MCF 10A (cell line): ENCODE measurements at regions of chr1 and their contacts with region 1.

Region 1: DNA sequence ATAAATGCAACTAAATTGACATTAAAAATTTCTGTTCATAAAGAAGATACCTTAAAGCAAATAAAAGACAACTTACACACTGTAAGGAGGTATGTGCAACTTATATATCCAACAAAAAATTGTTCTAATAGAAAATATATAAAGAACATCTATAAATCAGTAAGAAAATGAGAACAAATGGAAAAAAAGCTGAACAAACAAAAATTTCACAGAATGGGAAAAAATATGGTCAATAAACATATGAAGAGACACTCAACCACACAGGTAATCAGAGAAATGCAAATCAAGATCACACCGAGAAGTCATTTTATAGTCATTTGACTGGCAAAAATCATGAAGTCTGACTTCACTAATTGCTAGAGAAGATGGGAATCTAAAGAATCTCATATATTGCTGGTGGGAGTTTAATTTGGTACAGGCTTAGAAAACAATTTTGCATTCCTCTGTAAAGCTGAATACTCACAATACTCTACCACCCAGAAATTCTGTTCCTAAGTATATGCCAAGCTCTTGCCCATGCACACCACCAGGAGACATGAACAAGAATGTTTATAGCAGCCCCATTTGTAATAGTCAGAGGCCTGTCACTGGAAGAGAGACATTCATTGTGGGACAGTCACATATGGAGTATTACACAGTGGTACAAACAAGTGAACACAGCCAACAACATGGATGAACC is 22.0 kb upstream of the THEM5 start:
- DNase-seq: no peak
- H3K4me3 Mint-ChIP-seq: no peak overlapping the region
- H3K27ac Mint-ChIP-seq: no peak overlapping the region
- H3K4me1 Mint-ChIP-seq: no peaks in the 10 kb centered on the region
- H3K27me3 Mint-ChIP-seq: no peaks in the 10 kb centered on the region
- CTCF ChIP-seq: no peak

Region 2: DNA sequence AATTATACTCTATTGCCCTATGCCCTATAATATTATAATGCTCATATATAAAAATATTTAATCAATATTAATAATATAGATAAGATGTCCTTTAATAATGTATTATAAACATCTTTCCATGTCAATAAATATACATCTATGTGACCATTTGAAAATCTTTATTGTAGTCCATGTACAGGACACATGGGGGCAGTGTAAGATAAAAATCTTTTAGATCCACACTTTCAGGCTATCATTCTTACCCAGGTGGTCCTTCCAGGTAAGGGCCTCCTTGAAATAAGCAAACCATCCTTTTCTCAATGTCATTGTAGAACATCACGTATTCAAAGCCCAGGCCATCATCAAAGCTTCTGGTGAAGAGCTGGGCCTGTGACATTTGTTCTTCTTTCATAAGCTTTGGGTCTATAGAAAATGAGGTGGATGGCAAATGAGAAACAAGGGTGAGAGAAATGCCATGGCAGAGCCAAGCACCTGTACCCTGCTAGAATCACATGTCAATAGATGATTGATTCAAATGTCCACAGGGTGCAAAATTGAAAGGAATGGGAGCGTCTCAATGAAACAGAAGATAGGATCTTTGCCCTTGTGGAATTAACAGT is 13.5 kb after region 1 on chr1:
- CTCF ChIA-PET with region 1: interaction called, 7 read pairs
- POLR2A ChIA-PET with region 1: interaction called, 10 read pairs
- intact Hi-C with region 1: no loop called
- DNase-seq: peak; percentile 42
- H3K4me3 Mint-ChIP-seq: no peak overlapping the region
- H3K27ac Mint-ChIP-seq: no peak overlapping the region
- H3K4me1 Mint-ChIP-seq: peaks cover 30% of the 10 kb centered on the region
- H3K27me3 Mint-ChIP-seq: no peaks in the 10 kb centered on the region
- CTCF ChIP-seq: peak; percentile 53